ENCODE measurements at regions of chr20 and their contacts with region 1.

Region 1: GRCh38 chr20:5491455-5491854 is 174.7 kb upstream of the PROKR2 start:
- DNase-seq: no peak
- ATAC-seq: peak; percentile 90

Region 2: DNA sequence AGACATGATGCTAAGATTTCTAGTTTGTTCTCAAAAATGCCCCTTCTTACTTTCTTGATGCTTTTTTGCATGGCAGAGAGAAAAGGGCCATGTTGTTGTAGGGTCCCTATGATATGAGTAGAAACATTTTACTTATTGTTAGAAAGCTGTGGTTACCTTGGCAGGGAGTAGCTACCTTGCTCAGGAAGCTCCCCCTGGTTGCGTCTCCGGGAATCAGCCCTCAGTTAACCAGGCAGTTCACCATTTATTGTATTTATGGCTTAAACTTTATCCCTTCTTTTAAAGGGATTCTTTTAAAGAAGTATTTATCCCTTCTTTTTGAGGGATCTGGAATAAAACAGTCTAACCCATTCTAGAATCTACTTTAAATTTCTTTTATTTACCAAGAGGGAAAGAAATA is 60.8 kb before region 1 on chr20:
- intact Hi-C with region 1: loop called in 1 of 2 experiments (anchors 10 kb)
- DNase-seq: no peak
- ATAC-seq: no peak

Region 3: GRCh38 chr20:5445611-5446010 is 45.8 kb before region 1 on chr20:
- intact Hi-C with region 1: no loop called
- DNase-seq: no peak
- ATAC-seq: no peak

Region 4: GRCh38 chr20:5658912-5659345 is 167.5 kb after region 1 on chr20:
- intact Hi-C with region 1: no loop called
- DNase-seq: peak; percentile 48 to 55
- ATAC-seq: no peak

Region 5: DNA sequence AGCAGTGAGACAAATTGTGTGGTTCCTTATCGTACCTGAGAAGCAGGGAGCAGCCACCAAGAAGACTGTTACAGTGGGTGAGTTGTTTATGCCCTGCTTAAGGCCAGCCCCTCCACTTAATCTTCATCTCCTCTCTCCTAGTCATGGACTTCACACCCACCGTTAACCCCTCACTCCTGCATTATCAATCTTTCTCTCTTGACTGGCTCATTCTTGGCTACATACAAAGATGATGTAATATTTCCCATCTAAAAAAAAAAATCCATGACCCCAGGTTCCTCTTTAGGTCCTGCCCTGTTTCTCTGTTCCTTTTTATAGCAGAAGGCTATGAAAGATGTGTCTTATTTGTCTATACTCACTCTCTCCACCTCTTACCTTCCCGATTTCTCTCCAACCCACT is 331.1 kb after region 1 on chr20:
- intact Hi-C with region 1: no loop called
- DNase-seq: no peak
- ATAC-seq: no peak

Measured in left colon (tissue), 2 donors.